Transverse colon (tissue), 4 donors: ENCODE measurements at regions of chr13 and their contacts with region 1.

Region 1: DNA sequence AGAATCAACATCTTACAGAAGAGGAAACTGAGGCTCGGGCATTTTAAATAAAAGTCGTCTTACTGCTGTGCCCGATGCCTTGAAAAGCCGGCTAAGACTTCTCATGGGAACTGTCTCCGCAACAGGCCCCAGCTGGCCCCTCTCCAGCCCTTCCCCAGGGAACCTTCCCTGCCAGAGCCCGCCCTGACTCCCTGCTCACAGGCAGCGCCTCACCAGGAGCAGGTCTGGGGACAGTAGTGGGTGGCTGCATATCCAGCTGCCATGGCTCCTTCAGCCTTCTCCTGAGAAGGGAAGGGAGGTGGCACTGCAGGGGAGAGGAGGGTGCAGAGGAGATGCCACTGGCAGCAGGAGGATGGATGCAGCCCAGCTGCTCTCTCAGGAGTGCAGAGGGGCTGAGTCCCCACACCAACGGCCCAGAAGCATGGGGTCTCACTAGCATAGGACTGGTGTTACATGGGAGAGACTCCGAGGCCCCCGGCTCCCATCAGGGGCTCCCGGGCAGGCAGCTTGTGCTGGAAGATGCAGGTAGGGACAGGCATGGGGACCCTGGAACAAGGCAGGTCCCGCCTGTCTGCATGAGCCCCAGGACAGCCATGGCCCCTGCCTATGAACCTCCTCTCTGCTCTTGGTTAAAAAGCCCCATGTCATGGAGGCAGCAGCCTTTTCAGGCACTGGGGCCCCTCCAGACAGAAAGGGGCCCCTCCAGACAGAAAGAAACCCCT is 216.4 kb upstream of the SGCG start:
- DNase-seq: no peak
- H3K4me3 ChIP-seq: no peak overlapping the region
- H3K27ac ChIP-seq: no peak overlapping the region
- H3K4me1 ChIP-seq: no peaks in the 10 kb centered on the region
- H3K27me3 ChIP-seq: no peaks in the 10 kb centered on the region
- CTCF ChIP-seq: no peak
- EP300 ChIP-seq: no peak
- POLR2A ChIP-seq: no peak

Region 2: DNA sequence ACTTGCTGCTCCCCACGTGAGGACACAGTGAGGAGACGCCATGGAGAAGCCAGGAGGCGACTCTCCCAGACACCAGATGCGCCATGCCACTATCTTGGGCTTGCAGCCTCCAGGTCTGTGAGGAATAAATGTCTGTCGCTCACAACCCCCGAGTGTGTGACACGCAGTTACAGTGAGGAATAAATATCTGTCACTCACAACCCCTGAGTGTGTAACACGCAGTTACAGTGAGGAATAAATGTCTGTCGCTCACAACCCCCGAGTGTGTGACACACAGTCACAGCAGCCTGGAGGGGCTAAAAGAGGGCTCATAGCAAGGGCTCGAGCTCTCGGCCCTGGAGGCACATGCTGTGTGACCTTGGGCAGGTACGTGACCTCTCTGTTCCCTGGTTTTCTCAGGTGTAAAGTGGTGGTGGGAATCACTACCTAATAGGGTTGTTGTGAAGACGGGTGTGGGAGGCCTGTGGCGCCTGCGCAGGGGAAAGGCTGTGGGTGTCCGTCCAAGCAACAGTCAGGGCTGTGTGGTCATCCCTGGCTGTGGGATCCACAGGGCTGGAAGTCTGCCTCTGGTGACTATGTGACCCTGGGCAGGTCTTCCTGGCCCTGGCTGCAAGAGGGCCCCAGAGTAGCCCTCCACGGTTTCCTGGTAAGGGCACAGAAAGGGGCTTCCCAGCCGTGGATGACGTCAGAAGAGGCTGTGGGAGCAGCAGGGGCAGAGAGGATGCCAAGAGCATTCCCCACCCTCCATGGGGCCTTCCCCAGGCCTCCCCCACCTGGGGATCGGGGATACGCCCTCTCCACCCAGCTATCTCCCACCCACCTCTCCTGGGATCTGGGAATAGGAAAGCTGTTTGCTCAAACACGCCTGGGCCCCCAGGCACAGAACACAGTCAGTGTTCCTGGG is 1422.7 kb after region 1 on chr13:
- in situ Hi-C with region 1: loop called in 1 of 4 experiments (anchors 5 kb)
- intact Hi-C with region 1: loop called (anchors 5 kb)
- DNase-seq: no peak
- H3K4me3 ChIP-seq: no peak overlapping the region
- H3K27ac ChIP-seq: no peak overlapping the region
- H3K4me1 ChIP-seq: no peaks in the 10 kb centered on the region
- H3K27me3 ChIP-seq: no peaks in the 10 kb centered on the region
- CTCF ChIP-seq: no peak
- EP300 ChIP-seq: no peak
- POLR2A ChIP-seq: no peak